ENCODE measurements at regions of chr7 and their contacts with region 1.

Region 1: DNA sequence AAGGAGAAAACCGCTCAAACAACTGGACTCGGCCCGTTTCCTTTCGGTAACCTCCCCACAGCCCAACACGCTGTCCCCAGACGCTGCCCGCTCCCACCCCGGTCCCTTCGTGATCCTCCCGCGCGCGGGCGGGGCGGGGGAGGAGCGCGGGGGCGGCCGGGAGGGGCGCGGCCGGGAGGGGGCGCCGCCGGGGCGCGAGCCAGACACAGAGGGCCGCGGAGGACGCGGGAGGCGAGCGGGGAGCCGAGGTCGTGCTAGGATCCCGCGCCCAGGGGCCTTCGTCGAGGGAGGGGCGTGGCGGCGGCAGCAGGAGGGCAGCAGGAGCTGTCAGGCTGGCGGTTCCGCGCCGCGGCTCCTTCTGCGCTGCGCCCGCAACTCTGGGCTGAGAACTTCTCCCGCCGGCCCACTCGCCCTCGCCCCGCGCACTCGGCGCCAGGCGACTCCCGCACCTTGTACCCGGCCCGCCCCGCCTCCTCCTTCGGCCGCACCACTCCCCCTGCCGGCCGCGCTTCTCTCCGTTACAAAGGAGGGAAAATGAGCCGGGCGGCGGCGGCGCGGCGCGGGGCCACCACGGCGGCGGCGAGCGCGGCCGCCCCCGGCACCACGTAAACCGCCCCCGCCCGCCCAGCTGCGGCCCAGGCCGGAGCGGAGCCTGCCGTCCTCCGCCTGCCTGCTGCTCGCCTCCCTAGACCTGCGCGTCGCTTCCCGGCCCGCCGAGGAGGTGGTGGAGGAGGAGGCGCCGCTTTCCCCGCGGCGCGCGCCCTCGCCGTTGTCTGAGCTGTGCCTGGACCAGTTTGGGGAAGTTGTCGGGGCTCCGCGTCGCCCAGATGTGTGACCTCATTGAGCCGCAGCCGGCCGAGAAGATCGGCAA is at the start of gene CDK14:
- DNase-seq: peak; percentile 86
- ATAC-seq: peak; percentile 74 to 78
- total RNA-seq, gene CDK14: 35.9 to 53.5 TPM

Region 2: DNA sequence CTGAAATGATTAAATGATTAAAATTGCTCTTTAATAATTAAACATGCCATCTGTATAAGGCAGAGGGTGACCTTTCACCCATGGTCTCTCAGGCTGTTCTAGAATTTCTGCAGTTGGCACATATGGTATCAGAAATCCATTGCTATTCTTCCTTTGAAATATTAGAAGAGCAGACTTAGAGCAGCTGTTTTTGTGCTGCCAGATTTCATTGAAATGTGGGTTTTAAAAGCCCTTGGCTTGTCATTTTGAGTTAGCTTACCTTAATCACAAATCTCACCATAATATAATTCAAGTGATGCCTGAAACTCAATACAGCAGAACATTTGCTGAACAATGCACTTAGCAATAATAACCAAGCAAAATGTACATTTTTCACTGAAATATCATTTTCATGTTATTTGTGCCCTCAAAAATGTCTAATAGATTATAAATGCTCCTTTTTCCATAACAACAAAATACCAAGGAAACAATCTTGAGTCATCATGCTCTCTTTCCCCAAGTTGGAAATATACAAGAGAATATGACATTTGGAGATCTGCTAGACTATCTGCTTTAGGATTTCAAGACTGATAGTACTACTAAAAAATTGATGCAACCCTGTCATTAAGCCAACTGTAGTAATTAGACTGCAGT is 142.7 kb before region 1 on chr7:
- intact Hi-C with region 1: no loop called
- DNase-seq: no peak
- ATAC-seq: no peak

Region 3: GRCh38 chr7:90661290-90662151 is 65.5 kb after region 1 on chr7:
- intact Hi-C with region 1: loop called in 1 of 2 experiments (anchors 5 kb)
- DNase-seq: no peak
- ATAC-seq: peak; percentile 80 to 88

Region 4: GRCh38 chr7:90764848-90765570 is 169.0 kb after region 1 on chr7:
- intact Hi-C with region 1: no loop called
- DNase-seq: no peak
- ATAC-seq: no peak

Measured in left cardiac atrium (tissue), 4 donors.